Activated naive CD4-positive, alpha-beta T cell treated with anti-CD3 and anti-CD28 coated beads for 36 hours (primary cell): ENCODE measurements at regions of chr11 and their contacts with region 1.

Region 1: GRCh38 chr11:123246749-123247495 is 51.9 kb upstream of the CLMP start:
- DNase-seq: peak; percentile 92
- H3K4me3 Mint-ChIP-seq: no peak overlapping the region
- H3K27ac Mint-ChIP-seq: no peak overlapping the region
- H3K4me1 Mint-ChIP-seq: peaks cover 5% of the 10 kb centered on the region
- H3K27me3 Mint-ChIP-seq: peaks cover 2% of the 10 kb centered on the region

Region 2: GRCh38 chr11:122910775-122911174 is 336.1 kb before region 1 on chr11:
- CTCF ChIA-PET with region 1: no interaction called
- intact Hi-C with region 1: loop called (anchors 2 kb)
- DNase-seq: peak; percentile 46
- H3K4me3 Mint-ChIP-seq: no peak overlapping the region
- H3K27ac Mint-ChIP-seq: no peak overlapping the region
- H3K4me1 Mint-ChIP-seq: no peaks in the 10 kb centered on the region
- H3K27me3 Mint-ChIP-seq: no peaks in the 10 kb centered on the region

Region 3: GRCh38 chr11:123103326-123103980 is 143.5 kb before region 1 on chr11:
- CTCF ChIA-PET with region 1: interaction called, 130 read pairs
- intact Hi-C with region 1: loop called (anchors 1 kb)
- DNase-seq: peak; percentile 55
- H3K4me3 Mint-ChIP-seq: no peak overlapping the region
- H3K27ac Mint-ChIP-seq: no peak overlapping the region
- H3K4me1 Mint-ChIP-seq: peaks cover 30% of the 10 kb centered on the region
- H3K27me3 Mint-ChIP-seq: no peaks in the 10 kb centered on the region

Region 4: GRCh38 chr11:123116486-123116885 is 130.4 kb before region 1 on chr11:
- CTCF ChIA-PET with region 1: interaction called, 130 read pairs
- intact Hi-C with region 1: loop called (anchors 1 kb)
- DNase-seq: no peak
- H3K4me3 Mint-ChIP-seq: no peak overlapping the region
- H3K27ac Mint-ChIP-seq: no peak overlapping the region
- H3K4me1 Mint-ChIP-seq: peaks cover 4% of the 10 kb centered on the region
- H3K27me3 Mint-ChIP-seq: no peaks in the 10 kb centered on the region

Region 5: GRCh38 chr11:123235117-123235655 is 11.7 kb before region 1 on chr11:
- CTCF ChIA-PET with region 1: interaction called, 18 read pairs
- intact Hi-C with region 1: no loop called
- DNase-seq: peak; percentile 38
- H3K4me3 Mint-ChIP-seq: no peak overlapping the region
- H3K27ac Mint-ChIP-seq: no peak overlapping the region
- H3K4me1 Mint-ChIP-seq: peaks cover 14% of the 10 kb centered on the region
- H3K27me3 Mint-ChIP-seq: no peaks in the 10 kb centered on the region

Region 6: GRCh38 chr11:123478352-123478987 is 231.5 kb after region 1 on chr11:
- CTCF ChIA-PET with region 1: interaction called, 9 read pairs
- intact Hi-C with region 1: loop called (anchors 1 kb)
- DNase-seq: peak; percentile 43
- H3K4me3 Mint-ChIP-seq: no peak overlapping the region
- H3K27ac Mint-ChIP-seq: no peak overlapping the region
- H3K4me1 Mint-ChIP-seq: peaks cover 26% of the 10 kb centered on the region
- H3K27me3 Mint-ChIP-seq: no peaks in the 10 kb centered on the region

Region 7: GRCh38 chr11:124536520-124536919 is 1289.6 kb after region 1 on chr11:
- CTCF ChIA-PET with region 1: no interaction called
- intact Hi-C with region 1: no loop called
- DNase-seq: no peak
- H3K4me3 Mint-ChIP-seq: no peak overlapping the region
- H3K27ac Mint-ChIP-seq: no peak overlapping the region
- H3K4me1 Mint-ChIP-seq: no peaks in the 10 kb centered on the region
- H3K27me3 Mint-ChIP-seq: peaks cover 23% of the 10 kb centered on the region